Naive thymus-derived CD4-positive, alpha-beta T cell (primary cell): ENCODE measurements at regions of chr13 and their contacts with region 1.

Region 1: GRCh38 chr13:21595546-21595822 is 8.5 kb downstream of the MICU2 start:
- DNase-seq: no peak
- ATAC-seq: peak; percentile 14
- H3K4me3 ChIP-seq: no peak overlapping the region
- H3K4me3 Mint-ChIP-seq: peak overlapping the region in 8 of 10 donors; percentile 8 to 60 (median 28)
- H3K27ac ChIP-seq: no peak overlapping the region
- H3K27ac Mint-ChIP-seq: peak overlapping the region in 1 of 9 donors; percentile 48
- H3K4me1 ChIP-seq: peaks cover 0 to 22% of the 10 kb centered on the region in 2 donors
- H3K4me1 Mint-ChIP-seq: peaks cover 36 to 85% (median 80%) of the 10 kb centered on the region in 7 donors
- H3K27me3 ChIP-seq: no peaks in the 10 kb centered on the region
- H3K27me3 Mint-ChIP-seq: no peaks in the 10 kb centered on the region

Region 2: DNA sequence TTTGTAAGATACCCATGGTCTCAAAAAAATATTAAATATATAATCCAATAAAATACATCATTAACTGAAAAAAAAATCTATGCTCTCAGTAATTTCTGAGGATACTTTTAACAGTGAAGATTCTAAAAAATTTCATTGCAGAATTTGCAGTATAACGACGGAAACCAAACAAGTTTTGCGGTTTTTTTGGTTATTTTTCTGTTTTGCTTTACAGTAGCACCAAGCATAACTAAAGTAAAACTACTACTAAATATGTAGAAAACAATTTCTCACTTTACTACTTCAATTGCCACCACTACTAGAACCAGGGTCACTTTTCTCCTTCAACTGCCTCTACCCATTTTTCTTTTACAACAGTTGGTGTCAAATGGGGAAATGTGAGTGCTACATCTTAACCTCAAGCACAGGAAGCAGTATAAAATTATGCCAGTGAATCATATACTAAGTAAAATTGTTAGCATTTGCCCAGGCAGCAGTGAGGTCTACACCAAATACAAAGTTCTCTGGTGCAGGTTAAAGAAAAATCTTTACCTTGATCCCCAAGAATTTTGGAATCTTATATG is 15.6 kb before region 1 on chr13:
- CTCF ChIA-PET with region 1: no interaction called
- POLR2A ChIA-PET with region 1: interaction called, 3 read pairs
- intact Hi-C with region 1: loop called in 1 of 2 experiments (anchors 2 kb)
- DNase-seq: no peak
- ATAC-seq: peak; percentile 78
- H3K4me3 ChIP-seq: no peak overlapping the region
- H3K4me3 Mint-ChIP-seq: peak overlapping the region in 4 of 10 donors; percentile 7 to 30 (median 12)
- H3K27ac ChIP-seq: no peak overlapping the region
- H3K27ac Mint-ChIP-seq: peak overlapping the region in 2 of 9 donors; percentile 1 to 64
- H3K4me1 ChIP-seq: peaks cover 12 to 19% of the 10 kb centered on the region in 2 donors
- H3K4me1 Mint-ChIP-seq: peaks cover 13 to 59% (median 43%) of the 10 kb centered on the region in 7 donors
- H3K27me3 ChIP-seq: no peaks in the 10 kb centered on the region
- H3K27me3 Mint-ChIP-seq: no peaks in the 10 kb centered on the region

Region 3: GRCh38 chr13:22662771-22663170 is 1067.3 kb after region 1 on chr13:
- CTCF ChIA-PET with region 1: no interaction called
- POLR2A ChIA-PET with region 1: no interaction called
- intact Hi-C with region 1: no loop called
- DNase-seq: no peak
- ATAC-seq: no peak
- H3K4me3 ChIP-seq: no peak overlapping the region
- H3K4me3 Mint-ChIP-seq: no peak overlapping the region
- H3K27ac ChIP-seq: no peak overlapping the region
- H3K27ac Mint-ChIP-seq: no peak overlapping the region
- H3K4me1 ChIP-seq: no peaks in the 10 kb centered on the region
- H3K4me1 Mint-ChIP-seq: no peaks in the 10 kb centered on the region
- H3K27me3 ChIP-seq: no peaks in the 10 kb centered on the region
- H3K27me3 Mint-ChIP-seq: peaks cover 0 to 4% (median 0%) of the 10 kb centered on the region in 5 donors